Mammary epithelial cell (primary cell): ENCODE measurements at regions of chr1 and their contacts with region 1.

Region 1: DNA sequence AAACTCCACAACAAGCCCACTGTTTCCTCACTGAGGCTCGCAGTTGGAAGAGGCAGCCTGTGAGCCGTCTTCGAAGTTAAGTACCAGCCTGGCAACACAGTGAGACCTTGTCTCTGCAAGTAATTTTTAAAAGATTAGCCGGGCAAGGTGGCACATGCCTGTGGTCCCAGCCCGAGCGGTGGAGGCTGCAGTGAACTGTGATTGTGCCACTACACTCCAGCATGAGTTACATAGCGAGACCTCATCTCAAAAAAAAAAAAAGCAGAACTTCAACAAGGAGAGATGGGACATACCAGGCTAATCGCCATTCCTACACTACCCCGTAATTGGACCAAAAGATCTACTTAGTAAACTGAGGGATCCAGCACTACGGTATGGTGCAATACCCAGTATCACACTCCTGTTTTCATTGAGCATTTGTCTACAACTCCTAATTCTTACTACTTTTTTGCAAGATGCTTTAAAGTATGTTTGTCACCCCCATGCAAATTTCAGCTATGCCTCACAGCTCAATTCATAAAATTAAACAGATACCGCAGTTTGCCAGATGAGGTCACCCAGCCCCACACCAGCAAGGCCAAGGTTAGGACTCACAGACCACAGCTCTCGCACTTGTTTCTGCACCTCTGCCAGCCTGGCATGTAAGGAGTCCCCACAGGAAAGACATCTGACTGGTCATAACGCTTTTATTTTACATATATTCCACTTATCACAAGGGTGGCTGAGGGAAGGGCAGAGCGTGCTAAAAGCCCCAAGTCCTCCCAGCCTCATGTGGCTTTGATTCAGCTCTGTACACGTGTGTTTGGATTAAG is 21.0 kb downstream of the SDE2 start:
- DNase-seq: no peak
- H3K4me3 ChIP-seq: no peak overlapping the region
- H3K27ac ChIP-seq: no peak overlapping the region
- H3K4me1 ChIP-seq: no peaks in the 10 kb centered on the region
- H3K27me3 ChIP-seq: no peaks in the 10 kb centered on the region
- CTCF ChIP-seq: no peak

Region 2: GRCh38 chr1:225318706-225319575 is 659.2 kb before region 1 on chr1:
- CTCF ChIA-PET with region 1: no interaction called
- dilution Hi-C with region 1: no loop called
- in situ Hi-C with region 1: no loop called
- intact Hi-C with region 1: loop called (anchors 2 kb)
- DNase-seq: peak; percentile 36
- H3K4me3 ChIP-seq: no peak overlapping the region
- H3K27ac ChIP-seq: no peak overlapping the region
- H3K4me1 ChIP-seq: no peaks in the 10 kb centered on the region
- H3K27me3 ChIP-seq: no peaks in the 10 kb centered on the region
- CTCF ChIP-seq: peak; percentile 87 to 90

Region 3: DNA sequence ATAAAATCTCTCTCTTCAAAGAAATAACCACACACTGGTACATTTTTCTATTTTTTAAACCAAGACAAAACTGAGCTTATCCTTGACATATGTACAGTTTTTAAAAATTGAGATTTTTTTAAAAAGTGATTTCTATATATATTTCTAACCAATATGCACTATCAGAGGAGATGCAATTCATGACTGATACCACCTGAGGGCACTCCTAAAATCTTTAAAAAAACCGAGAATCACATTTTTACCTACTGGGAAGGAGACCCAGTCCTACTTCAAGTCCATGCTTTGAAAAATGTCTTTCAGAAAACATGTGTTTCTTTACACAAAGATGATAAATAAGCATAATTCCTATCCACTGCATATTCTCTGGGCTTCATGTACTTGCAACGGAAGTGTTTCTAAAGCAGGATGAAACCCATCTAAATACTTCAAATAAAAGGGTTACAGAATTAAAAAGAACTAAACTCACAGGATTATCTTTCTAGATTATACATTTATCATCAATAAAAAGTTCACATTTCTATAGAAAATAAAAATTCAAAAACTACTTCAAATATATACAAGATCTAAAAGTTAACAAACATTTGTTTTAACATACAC is 423.8 kb before region 1 on chr1:
- CTCF ChIA-PET with region 1: no interaction called
- dilution Hi-C with region 1: no loop called
- in situ Hi-C with region 1: no loop called
- intact Hi-C with region 1: loop called (anchors 10 kb)
- DNase-seq: no peak
- H3K4me3 ChIP-seq: no peak overlapping the region
- H3K27ac ChIP-seq: no peak overlapping the region
- H3K4me1 ChIP-seq: no peaks in the 10 kb centered on the region
- H3K27me3 ChIP-seq: no peaks in the 10 kb centered on the region
- CTCF ChIP-seq: peak; percentile 52 to 57

Region 4: DNA sequence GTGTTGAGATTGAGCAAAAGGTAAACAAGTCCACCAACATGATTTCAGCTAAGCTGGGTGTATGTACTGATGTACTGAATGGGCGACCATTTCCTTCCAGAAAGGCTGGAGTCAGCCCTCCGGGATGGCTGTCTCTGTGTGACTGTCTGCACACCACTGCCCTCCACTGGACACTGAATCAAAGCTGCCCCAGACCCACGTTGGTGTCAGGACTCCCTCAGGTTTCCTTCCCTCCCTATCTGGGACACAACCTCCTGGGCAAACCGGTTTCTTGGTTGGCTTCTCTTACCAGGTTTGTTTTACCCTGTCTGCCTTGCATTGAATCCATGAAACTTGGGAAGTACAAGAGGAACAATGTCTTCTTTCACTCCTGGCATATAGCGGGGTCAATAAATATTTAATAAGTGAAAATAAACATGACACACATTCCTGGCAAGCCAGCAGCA is 205.8 kb before region 1 on chr1:
- CTCF ChIA-PET with region 1: no interaction called
- dilution Hi-C with region 1: no loop called
- in situ Hi-C with region 1: loop called in 1 of 2 experiments (anchors 10 kb)
- intact Hi-C with region 1: loop called (anchors 1 kb)
- DNase-seq: peak; percentile 87
- H3K4me3 ChIP-seq: peak overlapping the region in 1 of 3 experiments; percentile 18
- H3K27ac ChIP-seq: no peak overlapping the region
- H3K4me1 ChIP-seq: peaks cover 40% of the 10 kb centered on the region
- H3K27me3 ChIP-seq: no peaks in the 10 kb centered on the region
- CTCF ChIP-seq: peak; percentile 94 to 96

Region 5: DNA sequence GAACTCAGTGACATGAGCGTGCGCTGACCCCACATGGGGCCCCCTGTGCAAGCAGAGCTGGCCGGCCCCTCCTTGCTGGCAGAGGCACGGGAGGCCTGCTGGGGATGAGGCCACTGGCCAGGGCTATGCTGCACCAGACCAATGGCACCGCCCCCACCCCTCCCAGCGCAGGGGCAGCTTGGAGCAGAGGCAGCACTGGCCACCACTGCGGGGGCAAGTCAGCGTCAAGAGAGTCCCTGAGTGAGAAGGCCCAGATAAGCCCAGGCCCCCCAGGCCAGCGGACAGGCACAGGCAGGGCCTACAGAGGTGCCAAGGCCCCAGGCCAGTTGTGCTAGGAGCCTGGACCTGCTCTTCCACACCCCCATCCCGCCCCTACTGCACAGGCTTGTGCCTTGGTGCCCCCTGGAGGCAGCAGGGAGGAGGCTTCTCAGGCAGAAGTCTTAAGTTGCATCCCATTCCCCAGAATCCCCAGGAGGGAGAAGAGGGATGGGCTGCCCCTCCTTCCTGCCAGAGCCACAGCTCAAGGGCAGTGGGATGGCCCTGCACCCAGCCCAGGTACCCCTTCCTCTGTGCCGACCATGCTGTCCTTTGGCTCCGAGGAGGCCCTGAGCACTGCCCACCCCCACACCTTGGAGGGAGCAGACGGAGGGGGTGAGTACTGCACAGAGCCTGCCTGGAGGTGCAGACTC is 132.4 kb before region 1 on chr1:
- CTCF ChIA-PET with region 1: no interaction called
- dilution Hi-C with region 1: no loop called
- in situ Hi-C with region 1: no loop called
- intact Hi-C with region 1: loop called (anchors 2 kb)
- DNase-seq: peak; percentile 56
- H3K4me3 ChIP-seq: no peak overlapping the region
- H3K27ac ChIP-seq: no peak overlapping the region
- H3K4me1 ChIP-seq: peaks cover 7% of the 10 kb centered on the region
- H3K27me3 ChIP-seq: no peaks in the 10 kb centered on the region
- CTCF ChIP-seq: peak; percentile 67 to 89

Region 6: GRCh38 chr1:225881969-225882693 is 96.0 kb before region 1 on chr1 and contains the start of gene TMEM63A:
- CTCF ChIA-PET with region 1: no interaction called
- dilution Hi-C with region 1: loop called (anchors 5 kb)
- in situ Hi-C with region 1: no loop called
- intact Hi-C with region 1: no loop called
- DNase-seq: peak; percentile 66
- H3K4me3 ChIP-seq: peak within 1 kb of the TSS; percentile 74 to 98 (median 83)
- H3K27ac ChIP-seq: peak within 1 kb of the TSS; percentile 46
- H3K4me1 ChIP-seq: peaks cover 24% of the 10 kb centered on the region
- H3K27me3 ChIP-seq: no peaks in the 10 kb centered on the region
- CTCF ChIP-seq: peak in 1 of 2 donors; percentile 40
- total RNA-seq, gene TMEM63A: 25.2 to 37.3 TPM